ENCODE measurements at regions of chr11 and their contacts with region 1.

Region 1: GRCh38 chr11:107392611-107393010 is 65.0 kb downstream of the CWF19L2 start:
- DNase-seq: no peak
- H3K4me3 ChIP-seq: no peak overlapping the region
- H3K27ac ChIP-seq: no peak overlapping the region
- H3K4me1 ChIP-seq: no peaks in the 10 kb centered on the region
- H3K27me3 ChIP-seq: no peaks in the 10 kb centered on the region
- CTCF ChIP-seq: no peak
- EP300 ChIP-seq: no peak
- POLR2A ChIP-seq: no peak

Region 2: DNA sequence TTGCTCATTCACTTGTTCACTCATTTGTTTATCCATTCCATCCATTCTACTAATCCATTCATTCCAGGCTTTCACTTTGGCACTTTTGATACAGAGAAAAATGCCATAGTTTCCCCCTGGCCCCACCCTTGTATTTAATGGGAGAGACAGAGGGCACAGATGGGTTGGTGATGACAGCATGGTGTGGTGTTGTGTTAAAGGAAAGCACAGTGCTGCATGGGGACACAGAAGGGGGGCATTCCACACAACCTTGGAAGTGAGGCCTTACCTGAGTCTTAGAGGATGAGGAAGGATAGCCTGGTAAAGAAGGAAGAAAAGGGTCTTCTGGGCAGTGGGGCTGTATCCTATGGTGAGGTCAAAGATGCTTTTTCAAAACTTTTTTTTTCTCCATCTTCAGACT is 1780.9 kb after region 1 on chr11:
- in situ Hi-C with region 1: no loop called
- intact Hi-C with region 1: loop called (anchors 5 kb)
- DNase-seq: no peak
- H3K4me3 ChIP-seq: no peak overlapping the region
- H3K27ac ChIP-seq: no peak overlapping the region
- H3K4me1 ChIP-seq: no peaks in the 10 kb centered on the region
- H3K27me3 ChIP-seq: no peaks in the 10 kb centered on the region
- CTCF ChIP-seq: no peak
- EP300 ChIP-seq: no peak
- POLR2A ChIP-seq: no peak